Activated B cell treated with CpG ODN at 0.5 μM for 24 hours (primary cell): ENCODE measurements at regions of chr11 and their contacts with region 1.

Region 1: GRCh38 chr11:92540096-92540495 is 315.5 kb downstream of the FAT3 start:
- DNase-seq: no peak
- ATAC-seq: no peak
- H3K4me3 Mint-ChIP-seq: no peak overlapping the region
- H3K27ac Mint-ChIP-seq: no peak overlapping the region
- H3K4me1 Mint-ChIP-seq: peaks cover 2% of the 10 kb centered on the region
- H3K27me3 Mint-ChIP-seq: no peaks in the 10 kb centered on the region
- CTCF ChIP-seq: no peak

Region 2: GRCh38 chr11:92489826-92490399 is 50.2 kb before region 1 on chr11:
- CTCF ChIA-PET with region 1: no interaction called
- POLR2A ChIA-PET with region 1: no interaction called
- intact Hi-C with region 1: loop called (anchors 5 kb)
- DNase-seq: no peak
- ATAC-seq: no peak
- H3K4me3 Mint-ChIP-seq: no peak overlapping the region
- H3K27ac Mint-ChIP-seq: no peak overlapping the region
- H3K4me1 Mint-ChIP-seq: no peaks in the 10 kb centered on the region
- H3K27me3 Mint-ChIP-seq: no peaks in the 10 kb centered on the region
- CTCF ChIP-seq: no peak